Cardiac septum (tissue), 1 donor: ENCODE measurements at regions of chr4 and their contacts with region 1.

Region 1: GRCh38 chr4:89164400-89164799 is 53.1 kb downstream of the TIGD2 start:
- DNase-seq: no peak

Region 2: DNA sequence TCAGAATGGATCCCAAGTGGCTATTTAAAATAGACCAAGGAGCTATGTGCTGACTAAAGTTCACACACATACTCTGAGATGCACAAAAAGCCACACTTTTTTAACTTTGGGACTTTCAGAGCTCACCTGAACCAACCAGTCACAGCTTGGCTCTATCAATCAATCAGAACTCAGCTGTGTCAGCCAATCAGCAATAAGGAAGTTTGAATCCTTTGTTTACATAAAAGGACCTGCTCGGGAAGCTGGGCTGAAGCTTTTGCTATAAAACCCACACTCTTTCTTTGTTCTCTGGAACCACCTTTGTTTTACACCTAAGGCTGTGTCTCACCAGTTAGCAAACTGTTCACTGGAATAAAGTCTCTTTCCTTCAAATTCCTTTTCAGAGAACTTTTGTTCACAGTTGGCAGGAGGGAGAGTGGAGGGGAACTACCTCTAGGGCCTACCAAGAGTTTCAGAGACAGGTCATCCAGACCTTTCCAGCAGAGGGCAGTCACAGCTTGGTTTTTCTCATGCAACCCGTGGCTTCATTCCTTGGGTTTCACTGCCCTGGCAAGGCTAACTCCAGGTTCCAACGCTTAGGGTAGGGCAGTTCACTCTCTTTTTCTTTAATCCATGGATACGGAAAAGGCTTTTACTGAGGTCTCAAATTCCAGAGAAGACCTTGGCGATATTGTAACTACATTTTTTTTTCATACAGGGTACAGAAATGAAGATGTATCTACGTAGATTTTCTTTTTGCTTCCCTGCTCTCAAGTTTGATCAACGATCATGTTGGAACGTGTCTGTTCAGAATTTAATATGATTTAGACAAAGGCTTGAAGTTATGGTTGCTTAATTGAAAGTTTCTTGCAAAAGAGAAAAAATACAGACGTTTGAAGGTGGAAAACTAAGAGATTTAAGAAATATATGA is 62.5 kb after region 1 on chr4:
- intact Hi-C with region 1: loop called (anchors 5 kb)
- DNase-seq: peak; percentile 85

Region 3: DNA sequence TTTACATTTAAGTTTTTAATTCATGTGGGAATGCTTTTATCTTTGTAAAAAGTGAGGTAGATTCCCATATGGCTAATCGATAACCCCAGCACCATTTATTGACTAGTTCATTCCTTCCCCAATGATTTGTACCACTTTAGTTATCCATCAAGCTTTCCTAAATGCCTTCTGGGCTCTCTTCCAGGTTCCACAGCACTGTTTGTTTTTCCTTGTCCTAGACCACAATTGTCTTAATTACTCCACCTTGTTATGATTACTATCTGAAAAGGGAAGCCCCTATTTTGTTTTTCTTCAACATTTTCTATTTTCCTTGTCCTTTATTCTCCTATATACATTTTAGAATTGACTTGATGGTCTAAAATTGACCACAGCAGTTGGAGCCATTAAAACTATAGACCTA is 191.7 kb after region 1 on chr4:
- intact Hi-C with region 1: no loop called
- DNase-seq: no peak